ENCODE measurements at regions of chr10 and their contacts with region 1.

Region 1: GRCh38 chr10:132354356-132355094 is 22.5 kb downstream of the LRRC27 start:
- DNase-seq: no peak
- ATAC-seq: no peak
- H3K4me3 ChIP-seq: no peak overlapping the region
- H3K27ac ChIP-seq: no peak overlapping the region
- H3K4me1 ChIP-seq: no peaks in the 10 kb centered on the region
- H3K27me3 ChIP-seq: no peaks in the 10 kb centered on the region
- CTCF ChIP-seq: no peak

Region 2: GRCh38 chr10:132307823-132308587 is 46.5 kb before region 1 on chr10 and contains the start of gene STK32C:
- intact Hi-C with region 1: loop called in 1 of 2 experiments (anchors 5 kb)
- DNase-seq: peak; percentile 93 to 96
- ATAC-seq: peak; percentile 95 to 98 (median 96)
- H3K4me3 ChIP-seq: peak within 1 kb of the TSS; percentile 82
- H3K27ac ChIP-seq: peak within 1 kb of the TSS; percentile 68
- H3K4me1 ChIP-seq: peaks cover 11% of the 10 kb centered on the region
- H3K27me3 ChIP-seq: peaks cover 0 to 24% (median 0%) of the 10 kb centered on the region in 3 donors
- CTCF ChIP-seq: no peak
- total RNA-seq, gene STK32C: 5.6 to 7.0 (median 6.1) TPM